A549 (cell line): ENCODE measurements at regions of chr1 and their contacts with region 1.

Region 1: GRCh38 chr1:112390775-112391602 is 5.0 kb upstream of the CTTNBP2NL start:
- DNase-seq: peak; percentile 74 to 90
- ATAC-seq: peak; percentile 78 to 82
- H3K4me3 ChIP-seq: peak overlapping the region; percentile 50
- H3K27ac ChIP-seq: peak overlapping the region; percentile 83 to 91
- H3K4me1 ChIP-seq: peaks cover 30% of the 10 kb centered on the region
- CTCF ChIP-seq: peak; percentile 78
- EP300 ChIP-seq: no peak
- POLR2A ChIP-seq: no peak
- RAD21 ChIP-seq: peak; percentile 85 to 86

Region 2: DNA sequence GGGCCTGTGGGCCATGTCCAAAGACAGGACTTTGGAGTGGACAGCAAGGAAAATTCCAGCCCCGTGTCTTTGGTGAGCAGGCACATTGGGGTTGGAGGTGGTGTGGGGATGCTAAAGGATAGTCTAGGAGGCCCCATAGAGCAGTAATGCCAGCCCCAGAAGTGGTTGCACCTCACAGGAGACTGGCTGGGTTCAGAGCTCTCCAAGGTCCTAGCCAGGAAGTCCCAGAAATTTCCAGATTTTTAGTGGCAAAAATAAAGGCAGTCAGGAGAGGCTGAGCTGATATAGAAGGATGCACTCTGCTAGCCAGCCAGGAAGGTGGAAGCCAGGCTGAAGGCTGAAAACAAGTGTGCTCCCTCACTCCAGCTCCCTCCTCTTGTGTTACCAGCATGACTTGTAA is 257.5 kb before region 1 on chr1:
- CTCF ChIA-PET with region 1: no interaction called
- POLR2A ChIA-PET with region 1: no interaction called
- DNase-seq: no peak
- ATAC-seq: no peak
- H3K4me3 ChIP-seq: no peak overlapping the region
- H3K27ac ChIP-seq: no peak overlapping the region
- H3K4me1 ChIP-seq: no peaks in the 10 kb centered on the region
- CTCF ChIP-seq: no peak
- EP300 ChIP-seq: no peak
- POLR2A ChIP-seq: no peak
- RAD21 ChIP-seq: no peak

Region 3: DNA sequence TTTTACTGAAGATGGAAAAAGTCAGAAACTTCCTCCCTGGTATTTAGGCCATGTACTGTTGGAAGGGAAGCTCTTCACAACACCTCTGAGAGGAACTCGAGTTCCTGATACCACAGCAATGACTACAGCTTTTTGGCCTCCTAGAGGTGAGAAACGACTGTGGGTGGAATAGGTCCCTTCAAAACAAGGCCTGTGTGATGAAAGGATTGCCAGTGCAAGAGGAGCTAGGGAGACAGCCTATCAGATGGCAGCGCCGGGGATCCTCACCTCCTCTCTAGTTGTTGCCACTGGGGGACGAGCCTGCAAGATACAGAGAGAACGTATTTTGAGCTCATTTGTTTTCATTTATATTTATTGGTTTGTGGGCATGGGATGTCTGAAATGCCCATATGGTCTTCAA is 213.7 kb before region 1 on chr1:
- CTCF ChIA-PET with region 1: no interaction called
- POLR2A ChIA-PET with region 1: no interaction called
- DNase-seq: no peak
- ATAC-seq: no peak
- H3K4me3 ChIP-seq: no peak overlapping the region
- H3K27ac ChIP-seq: no peak overlapping the region
- H3K4me1 ChIP-seq: no peaks in the 10 kb centered on the region
- CTCF ChIP-seq: no peak
- EP300 ChIP-seq: no peak
- POLR2A ChIP-seq: no peak
- RAD21 ChIP-seq: no peak

Region 4: GRCh38 chr1:112431038-112431437 is 40.0 kb after region 1 on chr1:
- CTCF ChIA-PET with region 1: interaction called, 13 read pairs
- POLR2A ChIA-PET with region 1: no interaction called
- DNase-seq: no peak
- ATAC-seq: no peak
- H3K4me3 ChIP-seq: no peak overlapping the region
- H3K27ac ChIP-seq: no peak overlapping the region
- H3K4me1 ChIP-seq: no peaks in the 10 kb centered on the region
- CTCF ChIP-seq: no peak
- EP300 ChIP-seq: no peak
- POLR2A ChIP-seq: no peak
- RAD21 ChIP-seq: no peak

Region 5: DNA sequence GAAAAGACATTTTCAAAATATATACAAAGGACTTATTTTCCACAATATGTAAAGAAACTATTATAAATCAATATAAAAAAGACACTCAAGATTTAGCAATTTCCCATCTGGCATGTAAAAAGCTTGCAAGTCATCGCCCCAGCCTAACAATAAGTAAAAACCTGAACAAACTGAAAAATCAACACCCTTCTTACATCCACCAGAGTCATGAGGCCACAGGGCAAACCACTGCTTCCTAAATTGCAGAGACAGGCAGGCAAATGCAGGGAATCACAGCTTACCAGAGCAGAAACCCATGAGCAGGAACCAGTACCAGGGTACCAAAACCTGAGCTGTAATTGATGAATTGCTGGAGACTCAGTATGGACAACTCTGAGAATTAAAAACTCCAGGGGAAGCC is 101.1 kb after region 1 on chr1:
- CTCF ChIA-PET with region 1: interaction called, 12 read pairs
- POLR2A ChIA-PET with region 1: no interaction called
- DNase-seq: no peak
- ATAC-seq: no peak
- H3K4me3 ChIP-seq: no peak overlapping the region
- H3K27ac ChIP-seq: no peak overlapping the region
- H3K4me1 ChIP-seq: no peaks in the 10 kb centered on the region
- CTCF ChIP-seq: no peak
- EP300 ChIP-seq: no peak
- POLR2A ChIP-seq: no peak
- RAD21 ChIP-seq: no peak

Region 6: GRCh38 chr1:112544011-112544688 is 153.2 kb after region 1 on chr1:
- CTCF ChIA-PET with region 1: interaction called, 13 read pairs
- POLR2A ChIA-PET with region 1: interaction called, 7 read pairs
- DNase-seq: peak; percentile 25 to 76
- ATAC-seq: peak; percentile 83 to 91; a peak in 5 of 6 replicates
- H3K4me3 ChIP-seq: no peak overlapping the region
- H3K27ac ChIP-seq: peak overlapping the region; percentile 82 to 87
- H3K4me1 ChIP-seq: peaks cover 29% of the 10 kb centered on the region
- CTCF ChIP-seq: no peak
- EP300 ChIP-seq: no peak
- POLR2A ChIP-seq: no peak
- RAD21 ChIP-seq: no peak

Region 7: DNA sequence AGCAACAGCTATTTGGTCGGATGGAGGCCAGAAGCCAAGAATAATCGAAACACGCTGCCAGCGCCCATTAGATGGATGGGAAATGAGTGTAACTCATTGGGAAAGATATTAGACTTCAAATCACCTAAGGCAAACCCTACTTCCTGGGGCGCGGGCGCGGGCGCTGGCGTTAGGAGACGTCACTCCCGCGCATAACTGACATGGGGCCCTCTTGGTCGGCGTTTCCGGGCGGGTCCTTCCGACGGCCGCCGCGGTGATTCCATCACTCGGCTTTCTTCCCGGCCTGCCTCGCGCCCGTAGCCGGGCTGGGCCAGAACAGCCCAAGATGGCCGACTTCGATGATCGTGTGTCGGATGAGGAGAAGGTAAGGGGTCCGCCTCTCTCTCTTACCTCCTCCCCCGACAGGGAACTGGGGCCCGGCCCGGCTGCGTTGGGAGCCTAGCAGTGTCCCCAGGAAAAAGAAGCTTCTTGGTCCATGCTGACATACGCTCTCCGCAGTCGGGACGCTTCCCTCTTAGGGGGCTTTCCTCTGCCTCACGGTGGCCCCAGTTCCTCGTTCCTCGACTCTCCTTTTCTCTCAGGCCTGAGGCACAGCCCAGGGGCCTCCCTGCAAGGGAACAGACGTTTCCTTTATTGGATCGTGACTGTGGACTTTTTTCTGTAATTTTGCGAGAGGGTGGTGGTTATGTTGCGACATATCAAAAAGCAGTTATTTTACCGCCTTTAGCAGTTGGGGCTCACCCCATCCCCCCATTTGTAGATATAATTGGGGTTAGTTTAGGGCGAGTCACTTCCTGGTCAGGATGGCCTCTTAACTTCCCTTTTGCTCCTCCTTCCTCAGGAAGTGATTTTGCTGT is 228.8 kb after region 1 on chr1 and contains the start of gene CAPZA1:
- CTCF ChIA-PET with region 1: interaction called, 32 read pairs
- POLR2A ChIA-PET with region 1: interaction called, 12 read pairs
- DNase-seq: peak; percentile 76 to 89
- ATAC-seq: peak; percentile 97 to 99
- H3K4me3 ChIP-seq: peak within 1 kb of the TSS; percentile 87
- H3K27ac ChIP-seq: peak within 1 kb of the TSS; percentile 97 to 99
- H3K4me1 ChIP-seq: peaks cover 28% of the 10 kb centered on the region
- CTCF ChIP-seq: no peak
- EP300 ChIP-seq: no peak
- POLR2A ChIP-seq: peak; percentile 67
- RAD21 ChIP-seq: no peak; a peak in 1 of 5 replicates
- polyA plus RNA-seq, gene CAPZA1: 99.7 and 136 TPM in 2 replicates

Region 8: GRCh38 chr1:112706908-112707663 is 316.1 kb after region 1 on chr1 and contains the start of gene RHOC:
- CTCF ChIA-PET with region 1: interaction called, 17 read pairs
- POLR2A ChIA-PET with region 1: interaction called, 9 read pairs
- DNase-seq: peak; percentile 82 to 86
- ATAC-seq: peak; percentile 75 to 77
- H3K4me3 ChIP-seq: peak within 1 kb of the TSS; percentile 99
- H3K27ac ChIP-seq: peak within 1 kb of the TSS; percentile 98 to 100
- H3K4me1 ChIP-seq: peaks cover 34% of the 10 kb centered on the region
- CTCF ChIP-seq: peak; percentile 79
- EP300 ChIP-seq: no peak
- POLR2A ChIP-seq: peak; percentile 62
- RAD21 ChIP-seq: peak; percentile 71 to 86
- polyA plus RNA-seq, gene RHOC: 255 and 321 TPM in 2 replicates